ENCODE measurements at regions of chr10 and their contacts with region 1.

Region 1: GRCh38 chr10:112314822-112315474 is 31.7 kb downstream of the TECTB start:
- DNase-seq: peak; percentile 37 to 78 (median 57)
- H3K4me3 ChIP-seq: no peak overlapping the region
- H3K4me3 Mint-ChIP-seq: no peak overlapping the region
- H3K27ac ChIP-seq: no peak overlapping the region
- H3K27ac Mint-ChIP-seq: no peak overlapping the region
- H3K4me1 ChIP-seq: no peaks in the 10 kb centered on the region
- H3K4me1 Mint-ChIP-seq: no peaks in the 10 kb centered on the region
- H3K27me3 ChIP-seq: no peaks in the 10 kb centered on the region
- H3K27me3 Mint-ChIP-seq: peaks cover 8 to 55% of the 10 kb centered on the region in 2 donors

Region 2: DNA sequence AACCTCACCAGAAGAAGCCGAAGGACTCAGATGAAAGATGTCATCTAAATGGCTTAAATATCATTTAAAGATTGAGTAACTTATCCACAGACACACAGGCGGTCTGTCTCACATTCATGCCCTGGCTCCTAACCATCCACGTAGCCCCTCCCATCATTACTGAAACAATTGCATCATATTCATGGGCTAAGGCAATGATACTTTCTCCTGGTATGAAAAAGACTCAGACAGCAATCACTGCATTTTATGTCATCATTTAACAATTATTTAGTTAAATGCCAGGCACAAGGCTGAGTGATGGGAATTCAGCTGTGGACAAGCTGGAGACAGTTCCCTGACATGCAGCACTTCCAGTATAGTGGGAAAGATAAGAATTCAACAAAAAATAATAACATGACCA is 43.0 kb before region 1 on chr10:
- CTCF ChIA-PET with region 1: no interaction called
- POLR2A ChIA-PET with region 1: no interaction called
- DNase-seq: no peak
- H3K4me3 ChIP-seq: no peak overlapping the region
- H3K4me3 Mint-ChIP-seq: no peak overlapping the region
- H3K27ac ChIP-seq: no peak overlapping the region
- H3K27ac Mint-ChIP-seq: no peak overlapping the region
- H3K4me1 ChIP-seq: no peaks in the 10 kb centered on the region
- H3K4me1 Mint-ChIP-seq: no peaks in the 10 kb centered on the region
- H3K27me3 ChIP-seq: peaks cover 4% of the 10 kb centered on the region
- H3K27me3 Mint-ChIP-seq: peaks cover 3 to 6% of the 10 kb centered on the region in 2 donors

Region 3: GRCh38 chr10:112434988-112435619 is 120.2 kb after region 1 on chr10:
- CTCF ChIA-PET with region 1: interaction called, 14 read pairs
- POLR2A ChIA-PET with region 1: no interaction called
- DNase-seq: peak in 2 of 5 donors; percentile 7 to 22
- H3K4me3 ChIP-seq: no peak overlapping the region
- H3K4me3 Mint-ChIP-seq: no peak overlapping the region
- H3K27ac ChIP-seq: no peak overlapping the region
- H3K27ac Mint-ChIP-seq: peak overlapping the region in 1 of 8 donors; percentile 27
- H3K4me1 ChIP-seq: no peaks in the 10 kb centered on the region
- H3K4me1 Mint-ChIP-seq: peaks cover 0 to 3% (median 2%) of the 10 kb centered on the region in 3 donors
- H3K27me3 ChIP-seq: no peaks in the 10 kb centered on the region
- H3K27me3 Mint-ChIP-seq: no peaks in the 10 kb centered on the region

Measured in CD8-positive, alpha-beta memory T cell (primary cell).